Caco-2 (cell line): ENCODE measurements at regions of chr16 and their contacts with region 1.

Region 1: GRCh38 chr16:81767987-81768592 is 11.0 kb upstream of the PLCG2 start:
- DNase-seq: peak; percentile 63 to 64
- H3K4me3 ChIP-seq: no peak overlapping the region
- H3K4me3 Mint-ChIP-seq: no peak overlapping the region
- H3K27ac Mint-ChIP-seq: no peak overlapping the region
- H3K4me1 ChIP-seq: peaks cover 16% of the 10 kb centered on the region
- H3K4me1 Mint-ChIP-seq: peaks cover 14% of the 10 kb centered on the region
- H3K27me3 ChIP-seq: no peaks in the 10 kb centered on the region
- H3K27me3 Mint-ChIP-seq: no peaks in the 10 kb centered on the region
- CTCF ChIP-seq: no peak

Region 2: GRCh38 chr16:81778861-81779535 is 10.9 kb after region 1 on chr16 and contains the start of gene PLCG2:
- CTCF ChIA-PET with region 1: interaction called, 4 read pairs
- POLR2A ChIA-PET with region 1: no interaction called
- intact Hi-C with region 1: loop called (anchors 1 kb)
- DNase-seq: peak; percentile 80 to 91
- H3K4me3 ChIP-seq: peak within 1 kb of the TSS; percentile 72
- H3K4me3 Mint-ChIP-seq: peak within 1 kb of the TSS; percentile 73
- H3K27ac Mint-ChIP-seq: peak within 1 kb of the TSS; percentile 67
- H3K4me1 ChIP-seq: peaks cover 7% of the 10 kb centered on the region
- H3K4me1 Mint-ChIP-seq: peaks cover 19% of the 10 kb centered on the region
- H3K27me3 ChIP-seq: 0 out of 2 replicates have a peak, but pooled peaks cover 1% of the 10 kb centered on the region
- H3K27me3 Mint-ChIP-seq: peaks cover 6% of the 10 kb centered on the region
- CTCF ChIP-seq: no peak
- total RNA-seq, gene PLCG2: 10.3 and 14.4 TPM in 2 replicates

Region 3: GRCh38 chr16:81814751-81815428 is 46.8 kb after region 1 on chr16:
- CTCF ChIA-PET with region 1: interaction called, 11 read pairs
- POLR2A ChIA-PET with region 1: no interaction called
- intact Hi-C with region 1: no loop called
- DNase-seq: no peak
- H3K4me3 ChIP-seq: no peak overlapping the region
- H3K4me3 Mint-ChIP-seq: no peak overlapping the region
- H3K27ac Mint-ChIP-seq: no peak overlapping the region
- H3K4me1 ChIP-seq: no peaks in the 10 kb centered on the region
- H3K4me1 Mint-ChIP-seq: no peaks in the 10 kb centered on the region
- H3K27me3 ChIP-seq: no peaks in the 10 kb centered on the region
- H3K27me3 Mint-ChIP-seq: no peaks in the 10 kb centered on the region
- CTCF ChIP-seq: no peak